A549 (cell line): ENCODE measurements at regions of chr7 and their contacts with region 1.

Region 1: DNA sequence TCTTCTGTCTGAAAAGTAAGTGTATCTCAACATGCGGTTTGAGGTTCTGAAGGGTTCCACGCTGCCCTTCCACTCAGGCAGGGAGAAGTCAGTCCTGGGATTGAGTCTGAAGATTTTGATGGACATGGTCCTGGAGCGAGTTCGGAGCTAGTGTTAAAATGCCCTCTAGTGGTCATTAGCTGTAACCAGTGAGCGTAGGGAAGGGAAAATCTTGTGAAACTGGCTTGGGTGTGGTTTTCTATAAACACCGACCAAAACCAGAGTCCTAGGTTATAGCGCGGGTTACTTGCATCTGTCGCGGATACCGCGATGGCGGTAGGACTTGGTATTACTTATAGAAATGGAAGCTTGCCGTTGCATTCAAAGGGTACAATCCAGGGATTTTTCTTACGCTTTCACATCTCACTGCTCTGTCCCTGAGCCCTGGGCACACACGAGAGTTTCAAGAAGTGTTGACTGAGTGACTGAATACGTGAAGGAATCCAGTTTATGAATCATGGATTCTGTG is 348.2 kb upstream of the C7orf33 start:
- DNase-seq: peak; percentile 62
- ATAC-seq: peak; percentile 92 to 98
- H3K4me3 ChIP-seq: no peak overlapping the region
- H3K27ac ChIP-seq: no peak overlapping the region
- H3K4me1 ChIP-seq: no peaks in the 10 kb centered on the region
- CTCF ChIP-seq: peak; percentile 76
- EP300 ChIP-seq: no peak
- POLR2A ChIP-seq: no peak
- RAD21 ChIP-seq: peak; percentile 69 to 74

Region 2: GRCh38 chr7:148173369-148173768 is 69.0 kb before region 1 on chr7:
- CTCF ChIA-PET with region 1: no interaction called
- POLR2A ChIA-PET with region 1: no interaction called
- DNase-seq: no peak
- ATAC-seq: no peak
- H3K4me3 ChIP-seq: no peak overlapping the region
- H3K27ac ChIP-seq: no peak overlapping the region
- H3K4me1 ChIP-seq: no peaks in the 10 kb centered on the region
- CTCF ChIP-seq: no peak
- EP300 ChIP-seq: no peak
- POLR2A ChIP-seq: no peak
- RAD21 ChIP-seq: no peak

Region 3: DNA sequence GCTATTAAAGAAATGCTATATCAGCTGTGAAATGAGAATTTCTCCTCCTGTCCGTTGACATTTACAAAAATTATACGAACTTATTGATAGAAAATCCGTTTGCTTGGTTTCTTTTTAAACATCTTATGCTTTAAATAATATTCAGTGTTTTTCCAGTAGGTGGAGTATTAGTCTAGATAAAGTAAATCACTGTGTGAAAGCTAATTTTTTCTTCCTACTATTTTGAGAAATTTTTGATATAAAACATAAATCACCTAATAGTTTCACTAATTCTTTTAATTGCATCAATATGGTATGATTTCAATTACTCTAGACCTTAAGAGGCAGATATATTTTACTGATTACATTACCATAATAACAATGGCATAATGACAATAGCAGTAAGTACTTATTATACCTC is 13.0 kb after region 1 on chr7:
- CTCF ChIA-PET with region 1: interaction called, 20 read pairs
- POLR2A ChIA-PET with region 1: no interaction called
- DNase-seq: no peak
- ATAC-seq: no peak
- H3K4me3 ChIP-seq: no peak overlapping the region
- H3K27ac ChIP-seq: no peak overlapping the region
- H3K4me1 ChIP-seq: no peaks in the 10 kb centered on the region
- CTCF ChIP-seq: peak; percentile 26; the same call in 1 of the 3 replicates
- EP300 ChIP-seq: no peak
- POLR2A ChIP-seq: no peak
- RAD21 ChIP-seq: peak; percentile 8 to 31; a peak in 2 of 5 replicates

Region 4: GRCh38 chr7:148261996-148262688 is 19.8 kb after region 1 on chr7:
- CTCF ChIA-PET with region 1: interaction called, 20 read pairs
- POLR2A ChIA-PET with region 1: no interaction called
- DNase-seq: no peak
- ATAC-seq: peak in 1 of 2 experiments; percentile 23; a peak in 3 of 6 replicates
- H3K4me3 ChIP-seq: no peak overlapping the region
- H3K27ac ChIP-seq: no peak overlapping the region
- H3K4me1 ChIP-seq: no peaks in the 10 kb centered on the region
- CTCF ChIP-seq: no peak
- EP300 ChIP-seq: no peak
- POLR2A ChIP-seq: no peak
- RAD21 ChIP-seq: no peak